Head of caudate nucleus (tissue), 42 donors: ENCODE measurements at regions of chr7 and their contacts with region 1.

Region 1: DNA sequence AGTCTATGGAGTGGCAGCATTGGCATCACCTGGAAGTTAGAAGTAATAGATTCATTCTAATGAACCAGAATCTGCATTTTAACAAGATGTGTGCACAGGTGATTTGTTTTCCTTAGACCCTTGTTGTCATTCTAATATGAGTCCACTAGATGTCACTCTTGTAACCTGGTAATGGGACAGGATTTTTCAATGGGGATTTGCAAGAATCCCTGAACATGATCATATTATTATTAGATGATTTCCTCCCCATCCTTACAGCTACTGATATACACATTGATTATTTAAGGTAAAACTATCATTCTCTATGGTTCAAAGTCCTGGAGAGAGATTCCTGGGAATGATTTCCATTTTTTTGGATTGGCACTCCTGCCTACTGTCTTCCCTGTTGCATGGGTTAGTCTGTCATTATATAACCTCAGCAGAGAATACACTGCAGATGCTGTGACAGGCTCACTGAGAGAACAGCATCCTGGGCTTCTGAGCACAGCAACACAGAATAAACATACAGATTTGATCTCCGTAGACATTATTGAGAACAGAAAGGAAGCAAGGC is 194.9 kb downstream of the SUGCT start:
- DNase-seq: peak in 17 of 42 donors; percentile 2 to 56 (median 16)

Region 2: DNA sequence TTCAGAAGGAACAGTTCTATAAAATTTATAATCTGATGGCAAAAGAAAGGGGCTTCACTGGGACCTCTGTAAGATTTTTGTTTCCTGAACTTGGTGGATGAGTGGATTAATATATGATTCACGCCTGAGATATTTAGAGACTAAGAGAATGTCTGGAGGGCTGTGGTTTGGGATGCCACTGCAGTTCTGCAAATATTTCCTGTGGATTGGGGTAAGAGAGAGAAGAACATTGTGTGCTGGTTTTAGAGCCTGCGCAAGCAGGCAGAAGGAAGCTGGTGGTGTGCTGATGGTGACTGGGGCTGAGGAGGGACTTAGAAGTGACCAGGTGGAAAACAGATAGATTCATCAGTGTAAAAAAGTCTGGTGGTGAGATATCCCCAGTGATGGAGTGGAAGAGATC is 107.8 kb before region 1 on chr7:
- intact Hi-C with region 1: no loop called
- DNase-seq: peak in 1 of 42 donors; percentile 2

Region 3: DNA sequence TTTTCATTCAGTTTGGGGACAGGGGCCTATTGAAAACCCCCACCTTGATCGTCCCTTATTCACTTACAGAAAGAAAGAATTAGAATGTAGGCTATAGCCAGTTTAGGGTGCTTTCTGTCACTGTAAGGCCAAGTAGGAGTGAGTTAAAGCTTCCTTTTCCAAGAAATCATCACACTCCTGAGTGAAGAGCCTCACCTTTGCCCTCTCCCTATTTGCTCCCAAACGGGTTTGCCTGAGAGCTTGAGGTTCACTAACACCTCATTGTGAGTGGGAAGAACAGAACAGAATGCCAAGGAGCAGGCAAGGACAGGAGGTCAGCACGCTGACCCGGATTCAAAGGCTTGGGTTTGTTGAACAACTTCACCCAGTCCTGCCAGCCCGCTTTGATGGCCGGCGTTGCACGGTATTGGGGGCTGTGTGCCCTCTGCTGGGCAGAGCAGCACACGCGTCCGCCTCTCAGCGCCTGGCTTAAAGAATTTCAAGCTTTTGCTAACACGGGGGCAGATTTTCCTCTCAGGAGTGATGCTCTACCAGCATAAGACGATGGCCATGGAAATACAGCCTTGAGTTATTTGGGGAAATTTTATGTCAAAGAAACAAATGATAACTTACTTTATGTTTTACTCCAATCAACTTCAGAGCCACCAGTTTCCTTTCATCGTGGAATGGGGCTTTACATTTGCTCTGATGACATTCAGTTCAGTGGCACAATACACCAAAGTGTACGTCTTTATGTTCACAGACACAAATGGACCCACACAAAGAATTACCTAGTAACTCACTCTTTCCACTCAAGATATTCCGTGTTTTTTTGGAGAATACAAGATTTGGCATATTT is 275.1 kb after region 1 on chr7:
- intact Hi-C with region 1: loop called (anchors 10 kb)
- DNase-seq: peak; percentile 12 to 81 (median 60)

Region 4: DNA sequence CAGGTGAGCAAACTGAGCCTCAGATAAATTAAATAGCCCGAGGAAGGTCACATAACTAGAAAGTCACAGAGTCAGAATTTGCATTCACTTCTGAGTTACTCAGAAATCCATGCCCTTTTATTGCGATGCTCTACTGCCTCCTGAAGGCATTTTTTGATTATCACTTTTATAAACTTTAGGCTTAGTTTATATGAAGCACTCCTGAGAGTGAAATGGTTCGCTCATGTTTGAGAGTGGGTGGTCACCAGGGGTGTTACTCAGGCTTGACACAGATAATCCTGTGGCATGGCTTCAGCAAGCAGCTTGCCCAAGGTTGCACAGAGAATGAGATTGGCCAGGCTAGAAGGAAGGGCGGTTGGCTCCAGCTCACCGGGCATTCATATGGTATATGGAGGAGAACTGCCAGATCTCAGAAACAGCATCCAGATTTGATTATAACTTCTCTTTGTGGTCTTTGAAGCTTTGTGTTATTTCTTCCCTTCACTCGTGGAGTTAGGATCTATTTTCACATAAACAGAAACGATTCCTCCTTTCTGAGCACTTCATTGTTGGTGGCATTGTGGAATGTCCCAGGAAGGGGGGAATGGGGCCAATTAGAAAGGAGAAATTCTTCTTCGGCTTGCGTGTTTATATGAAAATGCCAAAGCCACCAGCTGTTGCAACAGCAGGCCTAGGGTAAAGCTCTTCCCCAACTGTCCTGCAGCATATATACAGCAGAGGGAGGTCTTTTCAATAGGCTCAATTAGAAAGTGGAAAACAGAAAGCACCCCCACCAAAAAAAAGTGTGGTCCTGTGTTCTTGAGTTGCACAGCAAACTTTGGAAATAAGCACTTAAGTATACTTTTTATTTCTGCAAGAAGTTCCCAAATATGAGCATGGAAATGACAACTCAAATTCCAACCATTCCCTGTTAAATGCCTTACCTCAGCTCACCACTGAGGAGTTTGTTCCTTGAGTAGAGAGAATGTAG is 433.9 kb after region 1 on chr7:
- intact Hi-C with region 1: loop called (anchors 10 kb)
- DNase-seq: no peak

Region 5: GRCh38 chr7:40850017-40850416 is 520.3 kb after region 1 on chr7:
- intact Hi-C with region 1: no loop called
- DNase-seq: no peak